Ascending aorta (tissue), 2 donors: ENCODE measurements at regions of chr2 and their contacts with region 1.

Region 1: GRCh38 chr2:231514103-231514950 is 15.9 kb downstream of the NMUR1 start:
- DNase-seq: peak; percentile 97 to 99
- H3K4me3 ChIP-seq: peak overlapping the region; percentile 65 to 89
- H3K27ac ChIP-seq: peak overlapping the region; percentile 82 to 84
- H3K4me1 ChIP-seq: peaks cover 0 to 3% of the 10 kb centered on the region in 2 donors
- H3K27me3 ChIP-seq: no peaks in the 10 kb centered on the region
- CTCF ChIP-seq: no peak

Region 2: DNA sequence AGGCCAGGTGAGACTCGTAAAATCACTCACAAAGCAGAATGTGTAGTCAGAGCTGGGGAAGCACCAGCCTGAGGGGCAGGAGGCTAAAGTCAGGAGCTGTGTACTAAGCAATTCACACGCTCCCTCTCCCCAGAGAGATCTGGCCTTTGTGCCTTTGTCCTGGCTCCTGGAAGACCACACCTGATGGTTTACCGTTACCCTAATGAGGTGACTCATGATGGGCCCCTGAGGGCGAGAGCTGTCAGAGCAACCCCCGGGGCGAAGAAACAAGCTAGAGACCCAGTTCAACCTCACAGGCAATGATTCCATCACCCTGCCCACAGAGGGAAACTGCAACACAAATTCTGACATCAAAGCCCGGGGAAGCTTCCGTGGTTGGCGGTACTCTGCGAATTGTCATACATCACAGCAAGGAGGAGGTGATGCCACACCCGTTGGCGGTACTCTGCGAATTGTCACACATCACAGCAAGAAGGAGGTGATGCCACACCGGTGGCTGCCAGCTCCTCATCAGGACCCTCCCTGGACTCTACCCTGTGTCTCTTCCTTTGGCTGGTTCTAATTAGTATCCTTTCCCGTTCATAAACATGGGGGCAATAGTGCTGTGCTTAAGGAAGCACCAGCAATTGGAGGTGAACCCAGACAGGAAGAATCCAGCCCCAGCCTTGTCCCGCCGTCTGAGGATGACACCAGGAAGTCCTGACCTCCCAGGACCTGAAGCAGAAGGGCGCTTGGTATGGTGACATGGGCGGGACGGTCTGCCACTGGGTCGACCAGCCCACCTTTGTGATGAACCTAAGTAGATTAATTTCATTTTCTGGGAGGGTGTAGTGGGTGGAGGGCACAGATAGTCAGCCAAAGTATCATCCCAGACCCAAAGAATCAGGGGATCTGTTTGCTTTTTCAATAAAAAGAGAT is 88.3 kb before region 1 on chr2:
- intact Hi-C with region 1: no loop called
- DNase-seq: no peak
- H3K4me3 ChIP-seq: no peak overlapping the region
- H3K27ac ChIP-seq: no peak overlapping the region
- H3K4me1 ChIP-seq: no peaks in the 10 kb centered on the region
- H3K27me3 ChIP-seq: no peaks in the 10 kb centered on the region
- CTCF ChIP-seq: no peak

Region 3: GRCh38 chr2:231450548-231450989 is 63.8 kb before region 1 on chr2:
- intact Hi-C with region 1: no loop called
- DNase-seq: no peak
- H3K4me3 ChIP-seq: no peak overlapping the region
- H3K27ac ChIP-seq: no peak overlapping the region
- H3K4me1 ChIP-seq: no peaks in the 10 kb centered on the region
- H3K27me3 ChIP-seq: no peaks in the 10 kb centered on the region
- CTCF ChIP-seq: no peak

Region 4: DNA sequence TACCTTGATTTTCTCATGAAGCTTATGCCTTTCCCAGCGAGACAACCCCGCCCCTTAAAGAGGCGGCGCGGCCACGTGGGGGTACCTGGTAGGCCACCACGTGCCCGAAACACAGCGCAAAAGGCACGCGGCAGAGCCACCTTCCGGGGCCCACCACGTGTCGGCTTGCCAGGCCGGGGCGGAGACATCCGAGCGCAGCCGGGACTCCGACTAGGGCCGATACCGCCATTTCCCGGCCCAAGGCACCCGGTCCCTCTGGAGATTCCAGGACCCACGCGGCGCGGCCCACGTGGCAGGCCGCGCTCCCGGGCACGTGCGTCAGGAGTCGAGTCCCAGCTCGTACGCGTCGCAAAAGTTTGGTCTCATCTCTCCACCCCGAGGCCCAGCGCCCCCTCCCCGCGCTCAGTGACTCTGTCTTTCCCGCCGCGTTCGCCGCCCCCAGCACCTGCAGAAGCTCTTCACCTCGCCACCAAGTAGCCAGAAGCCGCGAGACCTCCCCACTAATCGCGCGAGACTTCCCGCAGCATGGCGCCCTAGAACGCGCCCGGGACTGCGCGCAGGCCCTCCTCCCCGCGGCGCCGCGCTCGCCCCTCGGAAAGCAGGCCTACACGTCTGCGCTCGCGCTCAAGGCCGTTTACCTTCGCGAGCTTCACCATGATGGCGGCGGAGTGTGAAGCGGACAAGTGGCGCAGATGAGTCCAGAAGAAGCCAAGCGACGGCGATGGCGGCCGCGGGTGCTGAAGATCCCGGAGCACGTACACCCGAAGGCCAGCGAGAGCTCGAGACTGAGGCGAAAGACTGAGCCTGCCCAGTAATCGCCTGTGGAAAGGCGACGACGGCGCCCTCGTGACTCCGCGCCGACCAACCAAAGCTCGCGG is 50.4 kb before region 1 on chr2 and contains the start of gene NCL:
- intact Hi-C with region 1: loop called (anchors 1 kb)
- DNase-seq: peak; percentile 35 to 88
- H3K4me3 ChIP-seq: peak within 1 kb of the TSS; percentile 78 to 79
- H3K27ac ChIP-seq: peak within 1 kb of the TSS; percentile 97 to 98
- H3K4me1 ChIP-seq: peaks cover 6 to 16% of the 10 kb centered on the region in 2 donors
- H3K27me3 ChIP-seq: no peaks in the 10 kb centered on the region
- CTCF ChIP-seq: no peak
- total RNA-seq, gene NCL: 136 TPM

Region 5: GRCh38 chr2:231557571-231558237 is 43.4 kb after region 1 on chr2:
- intact Hi-C with region 1: loop called (anchors 5 kb)
- DNase-seq: peak; percentile 15 to 78
- H3K4me3 ChIP-seq: no peak overlapping the region
- H3K27ac ChIP-seq: no peak overlapping the region
- H3K4me1 ChIP-seq: no peaks in the 10 kb centered on the region
- H3K27me3 ChIP-seq: no peaks in the 10 kb centered on the region
- CTCF ChIP-seq: peak; percentile 28 to 61 (median 44)

Region 6: DNA sequence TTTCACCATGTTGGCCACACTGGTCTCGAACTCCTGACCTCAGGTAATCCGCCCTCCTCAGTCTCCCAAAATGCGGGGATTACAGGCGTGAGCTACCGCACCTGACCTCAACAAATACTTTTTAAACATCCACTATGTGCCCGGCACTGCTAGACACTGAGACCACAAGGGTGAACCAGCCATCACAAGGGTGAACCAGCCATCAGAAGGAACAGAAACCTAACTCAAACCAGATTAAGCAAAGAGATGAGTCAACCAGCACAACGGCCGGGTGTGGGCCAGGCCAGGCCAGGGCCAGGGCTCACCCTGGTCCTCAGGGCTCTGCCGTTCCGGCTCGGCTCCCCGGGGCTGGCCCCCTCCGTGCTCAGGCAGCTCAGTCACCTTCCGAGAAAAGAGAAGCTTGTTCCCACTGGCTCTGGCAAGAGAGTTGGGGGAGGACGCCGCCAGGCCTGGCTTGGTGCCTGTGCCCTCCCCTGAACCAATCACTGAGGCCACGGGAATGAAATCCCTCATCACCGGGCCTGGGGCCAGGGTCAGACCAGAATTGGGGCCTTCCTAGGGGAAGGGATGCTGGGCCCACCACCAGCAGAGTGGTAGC is 82.8 kb after region 1 on chr2:
- intact Hi-C with region 1: loop called (anchors 1 kb)
- DNase-seq: peak; percentile 56 to 83
- H3K4me3 ChIP-seq: no peak overlapping the region
- H3K27ac ChIP-seq: peak overlapping the region; percentile 13 to 29
- H3K4me1 ChIP-seq: peaks cover 0 to 11% of the 10 kb centered on the region in 2 donors
- H3K27me3 ChIP-seq: no peaks in the 10 kb centered on the region
- CTCF ChIP-seq: no peak

Region 7: DNA sequence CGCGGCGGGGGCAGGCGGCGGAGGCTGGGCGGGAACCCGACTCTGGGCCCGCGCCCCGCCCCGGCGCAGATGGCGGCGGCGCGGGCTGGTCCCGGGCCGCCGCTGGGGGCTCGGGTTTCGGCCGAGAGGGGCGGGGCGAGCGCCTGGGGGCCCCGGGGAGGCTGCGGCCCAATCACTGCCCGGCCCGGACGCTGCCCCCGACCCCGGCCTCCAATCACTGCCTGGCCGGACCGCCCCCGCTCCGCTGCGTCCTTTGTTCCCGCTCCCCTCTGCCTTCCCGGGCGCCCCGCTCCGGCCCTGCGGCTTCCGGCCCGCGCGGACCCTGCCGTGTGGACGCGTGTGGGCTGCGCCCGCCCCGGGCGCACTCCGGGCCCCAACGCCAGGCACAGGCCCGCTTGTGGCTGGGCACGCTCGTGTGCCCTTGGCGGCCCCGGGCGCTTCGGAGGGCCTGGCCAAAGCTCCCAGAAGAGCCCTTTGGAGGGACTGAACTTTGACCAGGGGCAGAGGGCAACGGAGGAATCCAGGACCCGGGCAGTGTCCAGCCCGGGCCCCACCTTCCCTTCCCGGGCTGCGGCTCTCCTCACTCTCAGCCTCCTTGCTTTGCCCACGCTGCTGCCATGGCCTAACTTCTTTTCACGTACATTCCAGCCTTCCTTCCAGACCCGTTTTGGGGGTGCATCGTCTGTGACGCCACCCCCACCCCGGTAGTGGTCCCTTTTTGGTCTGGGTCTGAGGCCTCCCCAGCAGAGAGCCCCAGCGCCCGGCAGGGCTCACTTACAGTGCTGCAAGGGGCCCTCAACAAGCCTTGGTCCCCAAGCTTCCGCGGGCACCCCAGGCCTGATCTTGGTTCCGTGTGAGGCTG is 166.9 kb after region 1 on chr2:
- intact Hi-C with region 1: loop called (anchors 2 kb)
- DNase-seq: peak in 1 of 2 donors; percentile 90
- H3K4me3 ChIP-seq: peak overlapping the region; percentile 54 to 64
- H3K27ac ChIP-seq: peak overlapping the region; percentile 84 to 92
- H3K4me1 ChIP-seq: peaks cover 0 to 7% of the 10 kb centered on the region in 2 donors
- H3K27me3 ChIP-seq: no peaks in the 10 kb centered on the region
- CTCF ChIP-seq: no peak

Region 8: DNA sequence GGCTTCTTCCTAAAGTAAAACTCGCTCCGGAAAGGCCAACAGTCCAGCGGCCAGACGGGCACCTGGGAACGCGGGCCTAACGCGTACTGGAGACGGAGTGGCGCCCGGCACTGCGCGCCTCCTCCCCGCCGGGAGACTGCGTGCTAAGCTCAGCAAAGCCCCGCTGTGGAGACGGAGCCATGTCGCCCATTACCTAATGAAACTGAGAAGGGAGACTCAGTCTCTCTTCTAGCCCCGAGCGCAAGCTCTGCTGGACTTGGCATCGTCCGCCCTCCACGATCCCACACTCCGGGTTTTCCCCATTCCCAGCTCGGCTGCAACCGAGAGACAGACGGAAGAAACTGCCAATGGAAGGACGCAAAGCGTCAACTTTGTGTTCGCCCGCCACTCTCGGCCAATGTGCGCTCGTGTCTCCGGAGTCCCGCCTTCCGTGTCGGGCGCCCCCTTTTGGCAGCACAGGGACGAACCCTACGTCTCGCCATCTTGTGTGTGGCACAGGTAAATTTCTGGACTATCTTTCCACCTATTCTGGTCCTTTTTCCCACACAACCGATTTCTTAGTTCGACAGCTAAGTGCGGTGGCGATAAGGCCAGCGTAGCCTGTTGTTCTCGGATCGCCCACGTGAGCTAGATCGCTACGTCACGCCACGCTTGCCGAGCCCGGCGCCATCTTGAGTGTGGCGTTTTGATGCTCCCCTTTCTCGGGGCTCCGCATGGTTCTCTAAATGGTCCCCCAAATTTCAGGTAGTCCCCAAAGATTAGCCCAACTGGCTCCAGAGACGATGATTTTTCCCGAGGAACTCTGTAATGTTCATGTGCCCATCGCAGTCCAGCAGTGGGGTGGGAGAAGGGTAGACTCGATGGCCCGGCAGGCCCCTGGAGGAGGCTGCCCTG is 192.7 kb after region 1 on chr2:
- intact Hi-C with region 1: loop called (anchors 2 kb)
- DNase-seq: peak; percentile 90 to 99
- H3K4me3 ChIP-seq: peak overlapping the region; percentile 52 to 73
- H3K27ac ChIP-seq: peak overlapping the region; percentile 100
- H3K4me1 ChIP-seq: peaks cover 17 to 19% of the 10 kb centered on the region in 2 donors
- H3K27me3 ChIP-seq: no peaks in the 10 kb centered on the region
- CTCF ChIP-seq: peak; percentile 67 to 86 (median 75)

Region 9: DNA sequence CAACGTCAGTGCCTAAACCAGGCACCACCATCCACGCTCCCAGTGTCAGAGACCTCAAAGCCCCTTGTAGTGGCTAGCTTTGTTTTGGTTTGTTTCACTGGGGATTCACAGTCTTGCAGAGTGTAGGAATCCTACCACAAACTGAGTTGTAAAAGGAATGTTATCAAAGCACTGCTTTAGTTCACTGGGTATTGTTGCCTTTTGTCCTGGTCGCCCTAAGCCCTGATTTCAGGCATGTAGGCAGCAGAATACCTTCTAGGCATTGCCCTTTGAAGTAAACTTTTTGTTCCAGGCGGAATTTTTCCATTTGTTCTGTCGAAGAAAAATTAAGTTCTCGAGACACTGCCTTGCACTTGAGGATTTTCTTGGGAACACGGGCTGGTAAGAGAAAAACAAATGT is 223.4 kb after region 1 on chr2:
- intact Hi-C with region 1: no loop called
- DNase-seq: no peak
- H3K4me3 ChIP-seq: no peak overlapping the region
- H3K27ac ChIP-seq: no peak overlapping the region
- H3K4me1 ChIP-seq: no peaks in the 10 kb centered on the region
- H3K27me3 ChIP-seq: no peaks in the 10 kb centered on the region
- CTCF ChIP-seq: no peak

Region 10: GRCh38 chr2:231780909-231781797 is 266.8 kb after region 1 on chr2 and contains the start of gene PDE6D:
- intact Hi-C with region 1: loop called (anchors 2 kb)
- DNase-seq: peak; percentile 96 to 99
- H3K4me3 ChIP-seq: peak within 1 kb of the TSS; percentile 68 to 94
- H3K27ac ChIP-seq: peak within 1 kb of the TSS; percentile 83 to 85
- H3K4me1 ChIP-seq: peaks cover 4 to 29% of the 10 kb centered on the region in 2 donors
- H3K27me3 ChIP-seq: no peaks in the 10 kb centered on the region
- CTCF ChIP-seq: no peak
- total RNA-seq, gene PDE6D: 34.1 TPM